Activated CD8-positive, alpha-beta T cell treated with anti-CD3 and anti-CD28 coated beads for 36 hours (primary cell): ENCODE measurements at regions of chr11 and their contacts with region 1.

Region 1: GRCh38 chr11:86244522-86245368 is at the start of gene EED:
- DNase-seq: peak; percentile 95
- ATAC-seq: peak; percentile 87
- H3K4me3 Mint-ChIP-seq: no peak within 1 kb of the TSS
- H3K27ac Mint-ChIP-seq: no peak within 1 kb of the TSS
- H3K4me1 Mint-ChIP-seq: peaks cover 32% of the 10 kb centered on the region
- H3K27me3 Mint-ChIP-seq: no peaks in the 10 kb centered on the region
- CTCF ChIP-seq: no peak
- total RNA-seq, gene EED: 114 to 117 TPM

Region 2: DNA sequence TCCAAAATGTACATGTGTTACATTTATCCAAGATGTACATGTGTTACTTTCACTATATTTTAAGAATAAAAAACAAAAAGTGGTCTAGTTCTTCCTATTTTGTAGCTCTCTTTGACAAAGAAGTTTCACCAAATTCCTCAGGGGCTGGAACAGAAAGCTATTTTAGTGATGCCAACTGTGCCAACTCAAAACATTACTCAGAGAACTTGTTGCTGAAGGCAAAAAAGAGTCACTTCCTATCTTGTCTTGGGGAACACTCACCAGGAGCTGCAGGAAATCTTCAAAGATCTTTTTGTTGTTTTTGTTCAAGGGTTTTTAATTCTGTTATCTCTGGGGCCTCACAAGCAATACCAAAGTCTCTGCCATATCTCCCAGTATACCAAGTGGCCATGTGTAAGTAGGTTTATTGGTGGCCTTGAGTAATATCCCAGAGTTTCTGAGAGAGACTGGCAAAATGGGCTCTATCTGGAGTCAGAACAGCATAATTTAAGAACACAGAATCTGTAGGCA is 13.8 kb before region 1 on chr11:
- CTCF ChIA-PET with region 1: interaction called, 27 read pairs
- POLR2A ChIA-PET with region 1: interaction called, 14 read pairs
- intact Hi-C with region 1: no loop called
- DNase-seq: no peak
- ATAC-seq: no peak
- H3K4me3 Mint-ChIP-seq: peak overlapping the region; percentile 19
- H3K27ac Mint-ChIP-seq: peak overlapping the region; percentile 64
- H3K4me1 Mint-ChIP-seq: peaks cover 65% of the 10 kb centered on the region
- H3K27me3 Mint-ChIP-seq: no peaks in the 10 kb centered on the region
- CTCF ChIP-seq: no peak

Region 3: GRCh38 chr11:86360775-86361395 is 116.1 kb after region 1 on chr11:
- CTCF ChIA-PET with region 1: no interaction called
- POLR2A ChIA-PET with region 1: no interaction called
- intact Hi-C with region 1: no loop called
- DNase-seq: no peak
- ATAC-seq: no peak
- H3K4me3 Mint-ChIP-seq: no peak overlapping the region
- H3K27ac Mint-ChIP-seq: no peak overlapping the region
- H3K4me1 Mint-ChIP-seq: no peaks in the 10 kb centered on the region
- H3K27me3 Mint-ChIP-seq: peaks cover 2% of the 10 kb centered on the region
- CTCF ChIP-seq: no peak